AG04450 (cell line): ENCODE measurements at regions of chr3 and their contacts with region 1.

Region 1: GRCh38 chr3:79086514-79086913 is 681.3 kb downstream of the ROBO1 start:
- DNase-seq: peak; percentile 34
- H3K4me3 ChIP-seq: no peak overlapping the region
- H3K27ac ChIP-seq: no peak overlapping the region
- H3K27me3 ChIP-seq: no peaks in the 10 kb centered on the region
- CTCF ChIP-seq: peak; percentile 79

Region 2: GRCh38 chr3:78670094-78670493 is 416.4 kb before region 1 on chr3:
- CTCF ChIA-PET with region 1: no interaction called
- POLR2A ChIA-PET with region 1: no interaction called
- DNase-seq: no peak
- H3K4me3 ChIP-seq: no peak overlapping the region
- H3K27ac ChIP-seq: no peak overlapping the region
- H3K27me3 ChIP-seq: no peaks in the 10 kb centered on the region
- CTCF ChIP-seq: no peak

Region 3: GRCh38 chr3:79032686-79033318 is 53.7 kb before region 1 on chr3:
- CTCF ChIA-PET with region 1: interaction called, 11 read pairs
- POLR2A ChIA-PET with region 1: no interaction called
- DNase-seq: peak; percentile 13
- H3K4me3 ChIP-seq: no peak overlapping the region
- H3K27ac ChIP-seq: no peak overlapping the region
- H3K27me3 ChIP-seq: no peaks in the 10 kb centered on the region
- CTCF ChIP-seq: peak; percentile 68

Region 4: GRCh38 chr3:79097964-79098660 is 11.6 kb after region 1 on chr3:
- CTCF ChIA-PET with region 1: interaction called, 40 read pairs
- POLR2A ChIA-PET with region 1: no interaction called
- DNase-seq: no peak
- H3K4me3 ChIP-seq: no peak overlapping the region
- H3K27ac ChIP-seq: no peak overlapping the region
- H3K27me3 ChIP-seq: no peaks in the 10 kb centered on the region
- CTCF ChIP-seq: no peak

Region 5: DNA sequence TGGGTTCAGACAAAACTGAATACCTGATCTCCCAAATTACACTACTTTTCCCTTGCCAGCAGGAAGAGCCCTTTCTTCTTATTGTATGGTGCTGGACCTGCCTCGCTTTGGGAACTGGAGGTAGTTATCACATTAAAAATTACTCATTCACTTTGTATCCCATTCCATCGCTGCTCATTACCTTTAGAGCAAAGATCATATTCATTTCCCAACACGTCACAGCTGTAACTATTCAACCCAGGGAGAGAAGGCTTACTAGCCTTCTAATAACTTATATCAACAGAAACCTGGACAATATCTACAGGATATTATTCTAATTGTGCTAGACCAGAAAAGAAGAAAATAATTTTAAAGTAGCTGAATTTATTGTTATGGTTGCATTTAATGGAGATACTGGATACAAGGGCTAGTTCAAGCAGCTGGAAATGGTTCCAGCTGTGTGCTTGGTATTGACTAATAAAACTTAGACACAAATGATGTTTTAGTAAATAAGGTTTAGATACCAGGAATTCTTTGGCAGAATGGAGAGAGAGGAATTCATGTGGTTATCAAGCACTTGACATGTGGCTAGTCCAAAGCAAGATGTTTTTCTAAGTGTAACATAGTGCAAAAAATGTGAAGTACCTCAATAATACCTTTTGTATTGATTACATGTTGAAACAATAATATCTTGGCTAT is 25.0 kb after region 1 on chr3:
- CTCF ChIA-PET with region 1: interaction called, 11 read pairs
- POLR2A ChIA-PET with region 1: no interaction called
- DNase-seq: peak; percentile 4
- H3K4me3 ChIP-seq: no peak overlapping the region
- H3K27ac ChIP-seq: no peak overlapping the region
- H3K27me3 ChIP-seq: no peaks in the 10 kb centered on the region
- CTCF ChIP-seq: no peak

Region 6: DNA sequence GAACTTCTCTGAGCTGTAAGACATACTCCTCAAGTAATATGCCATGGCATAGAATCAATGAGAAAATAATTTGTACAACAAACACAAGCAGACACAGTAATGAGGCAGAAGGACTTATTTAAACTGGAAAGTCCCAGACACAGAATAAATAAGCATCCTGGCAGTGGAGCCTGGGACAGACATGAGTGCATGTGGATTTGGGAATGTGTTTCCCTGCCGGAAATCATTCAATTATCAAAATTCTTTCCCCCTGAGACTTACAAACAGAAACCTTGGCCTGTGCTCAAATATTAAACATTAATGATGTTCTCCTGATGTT is 161.2 kb after region 1 on chr3:
- CTCF ChIA-PET with region 1: interaction called, 21 read pairs
- POLR2A ChIA-PET with region 1: no interaction called
- DNase-seq: peak; percentile 27
- H3K4me3 ChIP-seq: peak overlapping the region; percentile 3; the same call in 1 of the 2 replicates
- H3K27ac ChIP-seq: peak overlapping the region; percentile 58
- H3K27me3 ChIP-seq: no peaks in the 10 kb centered on the region
- CTCF ChIP-seq: no peak

Region 7: GRCh38 chr3:79361748-79362378 is 275.3 kb after region 1 on chr3:
- CTCF ChIA-PET with region 1: interaction called, 265 read pairs
- POLR2A ChIA-PET with region 1: interaction called, 7 read pairs
- DNase-seq: peak; percentile 15
- H3K4me3 ChIP-seq: no peak overlapping the region
- H3K27ac ChIP-seq: no peak overlapping the region
- H3K27me3 ChIP-seq: no peaks in the 10 kb centered on the region
- CTCF ChIP-seq: peak; percentile 83